HEK293T (cell line): ENCODE measurements at regions of chr6 and their contacts with region 1.

Region 1: GRCh38 chr6:110341663-110342596 is 16.2 kb downstream of the METTL24 start:
- DNase-seq: peak; percentile 70

Region 2: GRCh38 chr6:110075406-110075805 is 266.5 kb before region 1 on chr6:
- CTCF ChIA-PET with region 1: no interaction called
- POLR2A ChIA-PET with region 1: no interaction called
- DNase-seq: no peak

Region 3: GRCh38 chr6:110331816-110332215 is 10.1 kb before region 1 on chr6:
- CTCF ChIA-PET with region 1: interaction called, 11 read pairs
- POLR2A ChIA-PET with region 1: interaction called, 3 read pairs
- DNase-seq: peak; percentile 36